ENCODE measurements at regions of chr22 and their contacts with region 1.

Region 1: GRCh38 chr22:32265882-32266767 is 11.0 kb upstream of the SLC5A4 start:
- DNase-seq: peak; percentile 90
- H3K4me3 Mint-ChIP-seq: no peak overlapping the region
- H3K27ac Mint-ChIP-seq: no peak overlapping the region
- H3K4me1 Mint-ChIP-seq: peaks cover 10% of the 10 kb centered on the region
- H3K27me3 Mint-ChIP-seq: peaks cover 2% of the 10 kb centered on the region

Region 2: DNA sequence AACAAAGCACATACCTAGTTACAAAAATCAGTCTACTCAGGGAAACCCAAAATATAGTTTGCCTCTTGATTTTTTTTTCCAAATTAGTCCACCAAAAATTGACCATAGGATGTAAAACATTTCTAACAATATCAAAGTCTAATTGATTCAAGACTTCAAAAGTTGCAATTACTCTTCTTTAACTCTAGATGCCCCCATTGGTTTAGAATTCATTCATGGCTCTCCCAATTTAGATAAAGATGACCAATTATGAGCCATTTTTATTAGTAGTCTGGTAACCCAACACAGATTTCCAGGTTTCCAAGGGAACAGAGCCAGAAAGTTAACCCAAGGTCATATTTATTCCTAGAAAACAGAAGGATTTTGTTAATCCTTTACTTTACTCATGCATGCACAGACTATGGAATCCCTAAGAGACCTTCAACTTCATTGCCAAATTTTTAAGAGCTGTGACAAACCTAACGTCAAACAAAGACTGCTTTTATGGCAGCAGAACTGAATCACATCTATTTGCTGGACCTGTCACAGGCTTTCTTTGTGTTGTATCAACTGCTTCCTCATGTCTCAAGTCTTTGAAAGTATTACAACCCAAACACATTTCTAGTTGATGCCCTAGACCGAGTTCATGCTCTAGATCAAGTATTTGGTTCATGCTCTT is 162.3 kb before region 1 on chr22:
- intact Hi-C with region 1: loop called (anchors 10 kb)
- DNase-seq: no peak
- H3K4me3 Mint-ChIP-seq: no peak overlapping the region
- H3K27ac Mint-ChIP-seq: no peak overlapping the region
- H3K4me1 Mint-ChIP-seq: no peaks in the 10 kb centered on the region
- H3K27me3 Mint-ChIP-seq: peaks cover 22% of the 10 kb centered on the region

Measured in activated CD4-positive, alpha-beta T cell treated with anti-CD3 and anti-CD28 coated beads, Interleukin-2, amount 10 ng/mL, durations not matched to agents 24 days and 14 days (primary cell).